Upper lobe of right lung (tissue), 1 donor: ENCODE measurements at regions of chr1 and their contacts with region 1.

Region 1: DNA sequence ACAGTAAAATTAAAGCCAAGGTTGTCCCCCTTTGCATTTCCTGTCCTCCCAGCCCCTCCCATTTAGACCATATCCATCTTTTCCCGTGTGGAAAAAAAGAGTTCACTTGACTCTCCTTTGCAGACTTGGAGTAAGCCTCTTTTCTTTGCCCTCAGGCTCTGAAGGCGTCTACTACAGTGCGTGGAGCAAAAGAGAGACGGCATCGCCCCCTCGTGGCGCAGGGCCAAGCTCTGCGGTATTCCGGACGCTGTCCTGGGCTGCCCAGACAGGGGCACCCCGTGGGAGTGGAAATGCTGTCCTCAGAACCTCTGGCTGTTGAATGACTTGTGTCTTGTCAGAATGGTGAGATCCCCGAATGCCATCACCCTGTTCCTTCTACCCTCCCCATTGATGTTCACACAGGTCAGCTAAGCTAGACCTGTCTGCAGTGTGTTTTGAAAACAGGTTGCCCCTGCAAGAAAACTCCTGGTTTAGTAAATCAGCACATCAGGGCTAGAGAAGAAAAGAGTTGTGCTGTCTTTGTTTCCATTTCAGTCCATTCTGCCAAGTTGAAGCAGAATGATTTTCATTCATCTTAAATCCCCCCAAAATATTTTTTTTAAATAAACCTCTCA is 12.3 kb upstream of the GJA8 start:
- DNase-seq: peak; percentile 89
- ATAC-seq: peak; percentile 94
- H3K4me3 ChIP-seq: no peak overlapping the region
- H3K27ac ChIP-seq: no peak overlapping the region
- H3K4me1 ChIP-seq: no peaks in the 10 kb centered on the region
- H3K27me3 ChIP-seq: no peaks in the 10 kb centered on the region
- CTCF ChIP-seq: peak; percentile 77

Region 2: DNA sequence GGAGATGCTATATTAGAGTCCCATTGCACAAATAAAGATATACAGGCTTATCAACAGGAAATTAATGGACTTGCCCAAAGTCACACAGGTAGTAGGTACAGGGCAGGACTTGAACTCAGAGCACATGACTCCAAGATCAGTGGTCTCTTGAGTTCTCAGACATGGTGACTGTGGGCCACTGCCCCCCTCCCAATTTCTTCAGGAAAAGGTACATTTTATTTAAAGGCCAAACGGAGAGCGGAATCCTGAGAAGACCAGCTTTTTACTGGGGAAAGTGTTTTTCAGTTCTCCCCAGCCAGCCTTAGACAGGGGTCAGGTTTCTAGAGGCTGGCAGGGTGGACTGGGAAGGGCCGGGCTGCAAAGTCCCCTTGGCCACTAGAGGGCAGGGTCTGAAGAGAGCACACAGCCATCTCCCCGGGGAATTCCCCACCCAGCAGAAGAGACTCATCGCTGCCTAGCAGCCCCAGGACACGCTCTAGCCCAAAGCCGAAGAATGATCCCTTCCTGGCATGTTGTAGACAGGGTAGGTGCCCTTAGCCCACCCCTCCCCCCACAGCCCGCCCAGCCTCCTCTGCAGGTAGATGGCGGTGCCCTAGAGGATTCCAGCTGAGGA is 249.6 kb before region 1 on chr1:
- intact Hi-C with region 1: loop called (anchors 10 kb)
- DNase-seq: peak; percentile 82
- ATAC-seq: peak; percentile 97
- H3K4me3 ChIP-seq: no peak overlapping the region
- H3K27ac ChIP-seq: no peak overlapping the region
- H3K4me1 ChIP-seq: no peaks in the 10 kb centered on the region
- H3K27me3 ChIP-seq: no peaks in the 10 kb centered on the region
- CTCF ChIP-seq: peak; percentile 89

Region 3: DNA sequence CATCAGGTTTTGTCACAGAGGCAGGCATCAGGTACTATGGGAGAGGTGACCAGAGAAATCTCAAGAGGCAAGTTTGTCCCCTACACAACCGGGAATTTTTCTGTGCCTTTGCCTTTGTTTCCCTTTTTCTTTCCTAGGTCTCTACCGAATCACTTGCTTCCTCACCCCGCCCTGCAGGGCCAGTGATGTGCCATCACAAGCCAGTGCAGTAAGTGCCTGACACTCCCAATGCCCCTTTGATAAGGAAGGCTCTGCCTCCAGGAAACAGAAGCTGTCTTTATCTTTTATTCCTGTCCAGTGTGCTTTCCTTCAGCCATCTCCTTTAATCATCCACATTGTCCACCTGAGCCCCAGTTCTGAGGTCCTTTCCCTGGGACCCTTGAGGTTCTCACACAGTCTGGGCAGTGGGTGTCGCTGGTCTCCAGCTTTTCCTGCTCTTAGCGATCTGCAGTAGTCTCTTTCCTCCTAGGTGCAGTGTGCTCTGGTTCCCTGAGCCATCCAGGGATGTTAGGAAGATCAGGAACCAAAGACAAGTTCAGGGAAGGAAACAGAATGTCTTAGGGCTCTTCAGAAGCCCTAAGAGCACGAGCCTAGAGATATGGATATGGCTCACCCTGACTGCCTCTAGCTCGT is 166.5 kb before region 1 on chr1:
- intact Hi-C with region 1: loop called (anchors 5 kb)
- DNase-seq: peak; percentile 72
- ATAC-seq: peak; percentile 94
- H3K4me3 ChIP-seq: no peak overlapping the region
- H3K27ac ChIP-seq: no peak overlapping the region
- H3K4me1 ChIP-seq: no peaks in the 10 kb centered on the region
- H3K27me3 ChIP-seq: peaks cover 6% of the 10 kb centered on the region
- CTCF ChIP-seq: peak; percentile 64

Region 4: GRCh38 chr1:147840907-147841306 is 49.4 kb before region 1 on chr1:
- intact Hi-C with region 1: no loop called
- DNase-seq: no peak
- ATAC-seq: peak; percentile 55
- H3K4me3 ChIP-seq: no peak overlapping the region
- H3K27ac ChIP-seq: no peak overlapping the region
- H3K4me1 ChIP-seq: no peaks in the 10 kb centered on the region
- H3K27me3 ChIP-seq: no peaks in the 10 kb centered on the region
- CTCF ChIP-seq: no peak